ENCODE measurements at regions of chr3 and their contacts with region 1.

Region 1: DNA sequence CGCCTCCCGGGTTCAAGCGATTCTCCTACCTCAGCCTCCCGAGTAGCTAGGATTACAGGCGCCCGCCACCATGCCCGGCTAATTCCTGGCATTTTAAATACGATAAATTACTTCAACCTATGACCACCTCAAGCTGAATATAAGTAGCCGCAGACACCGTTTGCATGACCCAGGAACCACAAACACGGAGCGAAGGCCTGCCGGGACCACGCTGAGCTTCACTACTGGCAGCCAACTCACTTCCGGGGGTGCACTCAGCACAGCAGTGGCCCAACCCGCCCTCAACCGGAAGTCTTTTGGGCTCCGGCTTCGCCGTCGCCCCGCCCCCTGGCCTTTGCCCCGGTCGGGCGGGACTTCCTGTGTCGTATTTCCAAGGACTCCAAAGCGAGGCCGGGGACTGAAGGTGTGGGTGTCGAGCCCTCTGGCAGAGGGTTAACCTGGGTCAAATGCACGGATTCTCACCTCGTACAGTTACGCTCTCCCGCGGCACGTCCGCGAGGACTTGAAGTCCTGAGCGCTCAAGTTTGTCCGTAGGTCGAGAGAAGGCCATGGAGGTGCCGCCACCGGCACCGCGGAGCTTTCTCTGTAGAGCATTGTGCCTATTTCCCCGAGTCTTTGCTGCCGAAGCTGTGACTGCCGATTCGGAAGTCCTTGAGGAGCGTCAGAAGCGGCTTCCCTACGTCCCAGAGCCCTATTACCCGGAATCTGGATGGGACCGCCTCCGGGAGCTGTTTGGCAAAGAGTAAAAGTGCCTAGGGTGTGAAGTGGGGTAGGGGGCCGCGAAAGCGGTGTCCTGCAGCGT is at the start of gene TIMMDC1:
- DNase-seq: peak; percentile 81
- H3K4me3 ChIP-seq: peak within 1 kb of the TSS; percentile 85
- H3K27me3 ChIP-seq: no peaks in the 10 kb centered on the region
- CTCF ChIP-seq: no peak
- polyA plus RNA-seq, gene TIMMDC1: 52.0 and 69.9 TPM in 2 replicates

Region 2: DNA sequence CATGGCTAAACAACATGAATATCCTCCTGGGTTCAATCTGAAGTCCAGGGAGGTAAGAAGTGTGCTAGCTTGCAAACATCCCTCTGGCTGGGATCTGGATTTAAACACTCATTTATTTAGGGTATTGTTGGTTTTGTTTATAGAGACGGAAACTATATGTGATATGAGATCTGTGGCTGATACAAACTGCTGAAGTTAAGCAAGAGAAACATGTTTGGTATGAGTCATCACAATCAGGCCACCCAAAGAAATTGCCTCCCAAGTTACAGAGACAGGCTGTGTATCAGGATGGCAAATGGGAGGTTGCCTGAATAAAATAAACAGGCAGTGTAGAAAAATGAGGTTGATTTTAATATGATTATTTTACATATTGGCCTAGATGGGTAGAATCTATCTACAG is 1025.8 kb before region 1 on chr3:
- CTCF ChIA-PET with region 1: no interaction called
- POLR2A ChIA-PET with region 1: no interaction called
- DNase-seq: no peak
- H3K4me3 ChIP-seq: no peak overlapping the region
- H3K27me3 ChIP-seq: no peaks in the 10 kb centered on the region
- CTCF ChIP-seq: no peak

Region 3: GRCh38 chr3:119580166-119580760 is 81.9 kb after region 1 on chr3:
- CTCF ChIA-PET with region 1: no interaction called
- POLR2A ChIA-PET with region 1: interaction called, 12 read pairs
- DNase-seq: no peak
- H3K4me3 ChIP-seq: peak overlapping the region; percentile 57
- H3K27me3 ChIP-seq: no peaks in the 10 kb centered on the region
- CTCF ChIP-seq: no peak

Measured in BJ (cell line).